Prostate gland (tissue), 2 donors: ENCODE measurements at regions of chr20 and their contacts with region 1.

Region 1: GRCh38 chr20:41173161-41173721 is 35.9 kb downstream of the PLCG1 start:
- DNase-seq: peak; percentile 76
- H3K4me3 ChIP-seq: no peak overlapping the region
- H3K27ac ChIP-seq: peak overlapping the region; percentile 57 to 62
- H3K4me1 ChIP-seq: no peaks in the 10 kb centered on the region
- H3K27me3 ChIP-seq: no peaks in the 10 kb centered on the region
- CTCF ChIP-seq: peak; percentile 83 to 95 (median 94)
- POLR2A ChIP-seq: no peak

Region 2: DNA sequence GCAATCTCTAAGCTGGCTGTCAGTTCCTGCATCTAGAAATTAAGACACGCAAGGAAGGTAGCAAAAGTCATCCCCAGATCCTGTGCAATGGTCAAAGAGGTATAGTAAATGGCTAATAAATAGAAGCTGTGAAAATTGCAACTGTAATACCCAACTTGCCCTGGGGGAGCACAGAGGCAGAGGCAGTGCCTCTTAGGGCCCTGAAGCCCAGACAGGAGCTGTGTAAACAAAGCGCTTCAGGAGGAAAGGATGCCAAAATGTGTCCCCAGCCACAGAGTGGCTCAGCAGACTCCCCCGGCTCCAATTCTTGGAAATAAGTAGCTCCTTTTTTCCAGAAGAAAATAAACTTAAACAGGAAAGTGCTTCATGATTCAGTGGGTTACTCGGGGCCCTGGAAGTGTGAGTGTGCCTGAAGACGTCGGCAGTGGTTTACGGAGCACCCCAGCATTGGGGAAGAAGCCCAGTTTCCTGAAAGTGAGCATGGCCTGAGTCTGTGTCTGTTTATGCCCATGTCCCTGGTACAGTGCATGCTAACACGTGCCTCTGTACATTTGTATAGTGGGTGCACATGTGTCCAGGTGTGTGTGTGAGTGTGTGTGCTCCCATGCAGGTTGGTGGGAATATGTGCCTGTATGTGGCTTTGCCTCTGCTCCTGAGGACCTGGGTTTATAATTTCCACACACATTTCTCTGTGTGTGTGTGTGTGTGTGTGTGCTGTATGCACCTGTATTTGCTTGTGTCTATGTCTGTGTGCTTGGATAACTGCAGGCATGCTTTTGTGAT is 730.9 kb before region 1 on chr20:
- intact Hi-C with region 1: no loop called
- DNase-seq: no peak
- H3K4me3 ChIP-seq: no peak overlapping the region
- H3K27ac ChIP-seq: no peak overlapping the region
- H3K4me1 ChIP-seq: no peaks in the 10 kb centered on the region
- H3K27me3 ChIP-seq: no peaks in the 10 kb centered on the region
- CTCF ChIP-seq: no peak
- POLR2A ChIP-seq: no peak

Region 3: DNA sequence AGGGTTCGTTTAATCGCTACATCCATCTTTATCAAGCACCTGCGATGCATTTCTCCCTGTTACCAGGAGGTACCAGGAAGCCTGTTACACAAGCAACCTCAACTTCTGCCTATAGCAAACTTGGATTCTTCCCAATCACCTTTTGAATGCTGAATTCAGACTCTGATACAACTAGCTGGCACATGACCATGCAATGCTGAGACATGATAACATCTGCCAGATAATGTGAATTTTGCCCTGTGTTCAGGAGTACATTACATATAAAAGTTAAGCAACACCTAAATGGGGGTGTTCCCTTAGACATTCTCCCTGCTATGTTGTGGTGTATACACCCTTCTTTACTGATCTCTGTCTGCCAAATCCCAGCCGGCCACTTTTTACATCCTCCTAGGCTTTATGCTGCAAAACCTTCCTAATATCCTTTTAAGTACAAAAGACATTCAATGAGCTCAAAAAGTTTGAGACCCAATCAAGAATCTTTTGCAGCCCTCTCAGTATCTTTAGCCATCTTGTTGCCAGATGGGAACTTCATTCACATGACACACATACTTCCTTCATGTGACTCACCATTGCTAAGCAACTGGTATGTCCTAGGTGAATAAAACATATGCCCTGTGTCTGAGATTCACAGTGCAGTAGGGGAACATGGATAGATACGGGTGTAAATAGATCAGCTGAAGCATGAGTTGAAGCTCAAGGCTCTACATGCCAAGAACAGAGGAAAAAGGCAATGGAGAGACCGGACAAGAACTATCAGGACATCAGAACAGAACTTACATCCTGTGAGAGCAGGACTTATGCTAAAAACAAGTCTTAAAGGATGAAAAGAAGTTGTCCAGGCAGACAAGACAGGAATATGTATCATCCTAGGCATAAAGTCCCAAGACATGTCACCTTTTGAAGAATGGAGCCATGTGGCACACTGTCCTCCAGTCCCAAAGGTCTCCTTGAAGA is 60.0 kb after region 1 on chr20:
- intact Hi-C with region 1: loop called (anchors 2 kb)
- DNase-seq: peak; percentile 31
- H3K4me3 ChIP-seq: no peak overlapping the region
- H3K27ac ChIP-seq: peak overlapping the region; percentile 4 to 26
- H3K4me1 ChIP-seq: no peaks in the 10 kb centered on the region
- H3K27me3 ChIP-seq: no peaks in the 10 kb centered on the region
- CTCF ChIP-seq: no peak
- POLR2A ChIP-seq: no peak

Region 4: GRCh38 chr20:41339507-41340326 is 166.5 kb after region 1 on chr20:
- intact Hi-C with region 1: loop called (anchors 1 kb)
- DNase-seq: peak; percentile 91
- H3K4me3 ChIP-seq: peak overlapping the region; percentile 26 to 28
- H3K27ac ChIP-seq: peak overlapping the region; percentile 71 to 72
- H3K4me1 ChIP-seq: peaks cover 4% of the 10 kb centered on the region
- H3K27me3 ChIP-seq: no peaks in the 10 kb centered on the region
- CTCF ChIP-seq: peak; percentile 99 to 100 (median 100)
- POLR2A ChIP-seq: no peak

Region 5: GRCh38 chr20:41411391-41411847 is 238.2 kb after region 1 on chr20:
- intact Hi-C with region 1: loop called (anchors 10 kb)
- DNase-seq: no peak
- H3K4me3 ChIP-seq: no peak overlapping the region
- H3K27ac ChIP-seq: peak overlapping the region; percentile 46 to 58
- H3K4me1 ChIP-seq: peaks cover 9% of the 10 kb centered on the region
- H3K27me3 ChIP-seq: no peaks in the 10 kb centered on the region
- CTCF ChIP-seq: peak in 3 of 4 experiments; percentile 31 to 42 (median 31)
- POLR2A ChIP-seq: no peak